MCF 10A (cell line): ENCODE measurements at regions of chr1 and their contacts with region 1.

Region 1: DNA sequence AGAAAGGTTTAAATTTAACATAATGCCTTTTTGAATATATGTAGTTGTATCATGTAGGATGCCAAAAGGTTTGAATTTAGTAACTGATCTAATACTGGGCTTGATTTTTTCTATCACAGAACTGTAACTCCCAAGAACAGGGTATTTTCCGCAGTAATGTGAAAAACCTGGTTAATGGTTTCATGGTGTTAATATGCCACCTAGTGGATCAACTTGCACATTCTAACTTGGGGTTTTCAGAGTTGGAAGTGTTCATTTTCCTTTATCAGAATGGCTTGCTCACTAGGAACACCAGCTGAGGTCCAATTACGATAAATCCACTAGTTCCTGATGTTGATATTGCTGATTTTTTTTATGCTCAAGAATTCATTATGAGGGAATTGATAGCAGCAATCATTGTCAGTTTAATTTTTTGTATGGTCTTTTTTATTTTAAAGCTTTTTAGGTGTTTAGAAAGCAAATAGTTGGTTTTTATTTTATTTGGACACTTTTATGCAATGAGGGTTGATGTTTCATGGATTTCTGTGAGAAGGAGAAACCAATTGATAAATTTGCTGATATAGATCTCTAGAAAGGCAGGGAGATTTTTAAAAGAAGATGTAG is 157.2 kb downstream of the PLA2G4A start:
- DNase-seq: peak; percentile 80
- H3K4me3 Mint-ChIP-seq: no peak overlapping the region
- H3K27ac Mint-ChIP-seq: no peak overlapping the region
- H3K4me1 Mint-ChIP-seq: no peaks in the 10 kb centered on the region
- H3K27me3 Mint-ChIP-seq: no peaks in the 10 kb centered on the region
- CTCF ChIP-seq: peak; percentile 90

Region 2: DNA sequence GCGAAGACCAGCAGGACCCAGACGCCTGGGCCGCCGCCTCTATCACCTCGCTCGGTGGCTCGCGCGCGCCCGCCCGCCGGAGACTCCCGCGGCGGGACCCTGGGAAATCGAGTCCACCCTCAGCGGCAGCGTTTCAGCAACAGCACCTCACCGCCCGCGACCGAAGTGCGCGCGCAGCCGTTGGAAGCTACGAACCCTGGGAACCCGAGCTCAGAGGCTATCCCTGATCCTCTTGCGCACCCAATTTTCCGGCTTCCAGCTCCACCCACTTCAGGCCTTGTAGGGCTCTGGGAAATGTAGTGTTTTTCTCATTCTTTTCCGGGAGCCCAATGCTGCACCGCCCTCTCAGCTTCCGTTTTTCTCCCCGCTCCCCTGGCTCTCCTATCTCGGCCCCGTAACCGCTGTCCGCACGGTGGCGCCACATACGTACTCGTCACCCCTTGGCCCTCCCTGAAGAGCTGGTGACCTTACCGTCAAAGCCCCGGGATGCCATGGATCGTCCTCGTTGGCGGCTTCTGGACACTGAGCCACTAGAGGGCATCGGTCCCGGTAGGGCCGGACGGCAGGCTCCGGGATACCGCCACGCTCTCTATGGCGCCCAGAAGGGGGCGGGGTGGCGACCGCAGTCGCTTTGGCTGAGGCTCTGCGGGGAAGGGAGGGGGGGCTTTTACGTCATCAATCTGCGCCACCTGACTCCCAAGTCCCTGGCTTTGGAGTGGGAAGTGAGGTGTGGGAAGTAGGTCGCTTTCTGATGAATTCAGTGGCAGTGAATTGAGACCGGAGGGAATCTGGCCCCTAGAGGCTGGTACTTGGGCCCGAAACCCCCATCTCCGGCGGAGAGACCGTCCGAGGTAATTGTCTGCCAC is 610.7 kb before region 1 on chr1 and contains the starts of genes ODR4 and TPR:
- CTCF ChIA-PET with region 1: interaction called, 6 read pairs
- POLR2A ChIA-PET with region 1: no interaction called
- intact Hi-C with region 1: loop called (anchors 1 kb)
- DNase-seq: peak; percentile 100
- H3K4me3 Mint-ChIP-seq: peak within 1 kb of the TSS; percentile 96
- H3K27ac Mint-ChIP-seq: peak within 1 kb of the TSS; percentile 100
- H3K4me1 Mint-ChIP-seq: peaks cover 22% of the 10 kb centered on the region
- H3K27me3 Mint-ChIP-seq: no peaks in the 10 kb centered on the region
- CTCF ChIP-seq: peak; percentile 96
- total RNA-seq, gene ODR4: 36.9 and 39.9 TPM in 2 replicates
- total RNA-seq, gene TPR: 126 and 140 TPM in 2 replicates

Region 3: DNA sequence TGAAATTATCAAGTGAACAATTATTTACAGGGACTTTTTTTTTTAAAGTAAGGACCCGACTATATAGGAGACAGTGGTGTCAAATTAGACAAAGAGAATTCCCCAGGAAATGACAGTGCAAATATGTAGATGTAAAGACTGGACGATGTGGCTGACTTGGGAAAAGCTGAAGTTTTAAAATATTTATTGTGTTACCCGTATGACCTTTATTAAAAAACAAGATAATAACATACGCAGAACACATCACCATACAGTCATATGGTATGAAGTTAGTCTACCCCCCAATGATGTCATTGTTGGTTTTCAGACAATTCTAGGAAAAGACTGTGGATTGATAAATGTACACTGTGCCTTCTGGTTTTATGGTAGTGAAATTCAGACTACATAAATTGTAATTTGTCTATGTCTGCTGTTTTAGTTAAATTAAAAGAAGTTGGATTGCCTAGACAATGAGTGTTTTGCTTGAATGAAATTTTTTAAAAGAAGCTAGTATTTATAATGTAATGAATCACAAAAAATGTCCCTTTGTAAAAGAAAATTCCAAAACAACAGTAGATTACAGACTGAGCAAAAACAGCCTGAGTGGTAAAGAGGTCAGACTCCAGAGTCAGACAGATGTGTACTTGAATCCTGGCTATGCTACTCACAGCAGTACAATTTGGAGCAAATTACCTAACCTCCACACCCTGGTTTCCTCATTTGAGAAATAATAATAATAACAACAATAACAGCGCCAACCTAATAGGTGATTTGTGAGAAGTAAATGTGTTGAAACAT is 509.5 kb before region 1 on chr1:
- CTCF ChIA-PET with region 1: interaction called, 11 read pairs
- POLR2A ChIA-PET with region 1: no interaction called
- intact Hi-C with region 1: no loop called
- DNase-seq: no peak
- H3K4me3 Mint-ChIP-seq: no peak overlapping the region
- H3K27ac Mint-ChIP-seq: no peak overlapping the region
- H3K4me1 Mint-ChIP-seq: no peaks in the 10 kb centered on the region
- H3K27me3 Mint-ChIP-seq: no peaks in the 10 kb centered on the region
- CTCF ChIP-seq: no peak

Region 4: GRCh38 chr1:186611156-186611555 is 374.8 kb before region 1 on chr1:
- CTCF ChIA-PET with region 1: interaction called, 77 read pairs
- POLR2A ChIA-PET with region 1: no interaction called
- intact Hi-C with region 1: no loop called
- DNase-seq: no peak
- H3K4me3 Mint-ChIP-seq: no peak overlapping the region
- H3K27ac Mint-ChIP-seq: no peak overlapping the region
- H3K4me1 Mint-ChIP-seq: no peaks in the 10 kb centered on the region
- H3K27me3 Mint-ChIP-seq: no peaks in the 10 kb centered on the region
- CTCF ChIP-seq: no peak

Region 5: DNA sequence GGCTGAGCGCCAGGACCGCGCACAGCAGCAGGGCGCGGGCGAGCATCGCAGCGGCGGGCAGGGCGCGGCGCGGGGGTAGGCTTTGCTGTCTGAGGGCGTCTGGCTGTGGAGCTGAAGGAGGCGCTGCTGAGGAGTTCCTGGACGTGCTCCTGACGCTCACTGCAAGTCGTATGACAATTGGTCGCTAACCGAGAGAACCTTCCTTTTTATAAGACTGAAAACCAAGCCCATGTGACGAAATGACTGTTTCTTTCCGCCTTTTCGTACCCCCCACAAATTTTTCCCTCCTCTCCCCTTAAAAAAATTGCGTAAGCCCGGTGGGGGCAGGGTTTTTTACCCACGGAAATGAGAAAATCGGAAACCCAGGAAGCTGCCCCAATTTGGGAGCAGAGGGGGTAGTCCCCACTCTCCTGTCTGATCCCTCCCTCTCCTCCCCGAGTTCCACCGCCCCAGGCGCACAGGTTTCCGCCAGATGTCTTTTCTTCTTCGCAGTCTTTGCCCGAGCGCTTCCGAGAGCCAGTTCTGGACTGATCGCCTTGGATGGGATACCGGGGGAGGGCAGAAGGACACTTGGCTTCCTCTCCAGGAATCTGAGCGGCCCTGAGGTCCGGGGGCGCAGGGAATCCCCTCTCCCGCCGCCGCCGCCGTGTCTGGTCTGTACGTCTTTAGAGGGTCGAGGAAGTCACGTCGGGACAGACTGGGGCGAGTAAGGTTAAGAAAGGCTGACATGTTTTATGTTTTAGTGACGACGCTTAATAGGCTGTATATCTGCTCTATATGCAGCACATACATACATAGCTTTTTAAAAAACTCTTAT is 305.5 kb before region 1 on chr1 and contains the start of gene PTGS2:
- CTCF ChIA-PET with region 1: interaction called, 21 read pairs
- POLR2A ChIA-PET with region 1: interaction called, 8 read pairs
- intact Hi-C with region 1: loop called (anchors 1 kb)
- DNase-seq: peak; percentile 96
- H3K4me3 Mint-ChIP-seq: peak within 1 kb of the TSS; percentile 96
- H3K27ac Mint-ChIP-seq: peak within 1 kb of the TSS; percentile 97
- H3K4me1 Mint-ChIP-seq: peaks cover 29% of the 10 kb centered on the region
- H3K27me3 Mint-ChIP-seq: no peaks in the 10 kb centered on the region
- CTCF ChIP-seq: peak; percentile 64
- total RNA-seq, gene PTGS2: 6.0 and 17.6 TPM in 2 replicates

Region 6: DNA sequence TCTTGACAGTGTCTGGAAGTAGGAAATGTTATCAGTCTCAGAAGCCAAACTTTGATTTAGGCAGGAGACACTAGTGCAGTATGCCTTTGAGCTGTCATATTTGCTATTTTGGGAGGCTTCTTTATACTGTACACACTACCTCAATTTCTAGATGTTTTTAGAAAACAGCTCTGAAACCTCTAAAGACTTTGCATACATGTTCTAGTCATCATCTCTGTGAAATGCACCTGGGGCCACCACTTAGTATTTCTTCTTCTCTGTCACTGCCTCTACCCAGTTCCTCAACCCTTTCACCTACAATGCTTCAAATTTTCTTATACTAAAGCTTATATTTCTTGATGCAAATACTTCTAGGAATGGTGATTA is 186.3 kb before region 1 on chr1:
- CTCF ChIA-PET with region 1: no interaction called
- POLR2A ChIA-PET with region 1: no interaction called
- intact Hi-C with region 1: no loop called
- DNase-seq: no peak
- H3K4me3 Mint-ChIP-seq: no peak overlapping the region
- H3K27ac Mint-ChIP-seq: no peak overlapping the region
- H3K4me1 Mint-ChIP-seq: no peaks in the 10 kb centered on the region
- H3K27me3 Mint-ChIP-seq: no peaks in the 10 kb centered on the region
- CTCF ChIP-seq: no peak

Region 7: GRCh38 chr1:186828611-186829454 is 157.2 kb before region 1 on chr1 and contains the start of gene PLA2G4A:
- CTCF ChIA-PET with region 1: interaction called, 4 read pairs
- POLR2A ChIA-PET with region 1: no interaction called
- intact Hi-C with region 1: loop called (anchors 10 kb)
- DNase-seq: peak; percentile 89
- H3K4me3 Mint-ChIP-seq: peak within 1 kb of the TSS; percentile 97
- H3K27ac Mint-ChIP-seq: peak within 1 kb of the TSS; percentile 65
- H3K4me1 Mint-ChIP-seq: no peaks in the 10 kb centered on the region
- H3K27me3 Mint-ChIP-seq: no peaks in the 10 kb centered on the region
- CTCF ChIP-seq: no peak
- total RNA-seq, gene PLA2G4A: 2.1 and 3.8 TPM in 2 replicates

Region 8: GRCh38 chr1:186974774-186975181 is 11.2 kb before region 1 on chr1:
- CTCF ChIA-PET with region 1: interaction called, 13 read pairs
- POLR2A ChIA-PET with region 1: interaction called, 3 read pairs
- intact Hi-C with region 1: no loop called
- DNase-seq: peak; percentile 68
- H3K4me3 Mint-ChIP-seq: no peak overlapping the region
- H3K27ac Mint-ChIP-seq: peak overlapping the region; percentile 3
- H3K4me1 Mint-ChIP-seq: peaks cover 17% of the 10 kb centered on the region
- H3K27me3 Mint-ChIP-seq: no peaks in the 10 kb centered on the region
- CTCF ChIP-seq: no peak

Region 9: GRCh38 chr1:187129132-187129531 is 143.1 kb after region 1 on chr1:
- CTCF ChIA-PET with region 1: no interaction called
- POLR2A ChIA-PET with region 1: no interaction called
- intact Hi-C with region 1: no loop called
- DNase-seq: no peak
- H3K4me3 Mint-ChIP-seq: no peak overlapping the region
- H3K27ac Mint-ChIP-seq: no peak overlapping the region
- H3K4me1 Mint-ChIP-seq: no peaks in the 10 kb centered on the region
- H3K27me3 Mint-ChIP-seq: no peaks in the 10 kb centered on the region
- CTCF ChIP-seq: no peak